Activated CD8-positive, alpha-beta T cell treated with anti-CD3 and anti-CD28 coated beads for 36 hours (primary cell): ENCODE measurements at regions of chr6 and their contacts with region 1.

Region 1: GRCh38 chr6:121849477-121849876 is 414.0 kb downstream of the GJA1 start:
- DNase-seq: peak; percentile 61
- ATAC-seq: peak; percentile 80
- H3K4me3 Mint-ChIP-seq: no peak overlapping the region
- H3K27ac Mint-ChIP-seq: no peak overlapping the region
- H3K4me1 Mint-ChIP-seq: no peaks in the 10 kb centered on the region
- H3K27me3 Mint-ChIP-seq: peaks cover 2% of the 10 kb centered on the region
- CTCF ChIP-seq: peak; percentile 54

Region 2: GRCh38 chr6:121055572-121056163 is 793.8 kb before region 1 on chr6:
- CTCF ChIA-PET with region 1: interaction called, 8 read pairs
- POLR2A ChIA-PET with region 1: no interaction called
- intact Hi-C with region 1: loop called (anchors 10 kb)
- DNase-seq: no peak
- ATAC-seq: peak; percentile 56
- H3K4me3 Mint-ChIP-seq: no peak overlapping the region
- H3K27ac Mint-ChIP-seq: no peak overlapping the region
- H3K4me1 Mint-ChIP-seq: no peaks in the 10 kb centered on the region
- H3K27me3 Mint-ChIP-seq: no peaks in the 10 kb centered on the region
- CTCF ChIP-seq: peak; percentile 90

Region 3: GRCh38 chr6:121430514-121431460 is 418.7 kb before region 1 on chr6:
- CTCF ChIA-PET with region 1: interaction called, 3 read pairs
- POLR2A ChIA-PET with region 1: no interaction called
- intact Hi-C with region 1: loop called (anchors 5 kb)
- DNase-seq: no peak
- ATAC-seq: no peak
- H3K4me3 Mint-ChIP-seq: no peak overlapping the region
- H3K27ac Mint-ChIP-seq: no peak overlapping the region
- H3K4me1 Mint-ChIP-seq: no peaks in the 10 kb centered on the region
- H3K27me3 Mint-ChIP-seq: peaks cover 7% of the 10 kb centered on the region
- CTCF ChIP-seq: no peak

Region 4: GRCh38 chr6:121838842-121839241 is 10.6 kb before region 1 on chr6:
- CTCF ChIA-PET with region 1: interaction called, 10 read pairs
- POLR2A ChIA-PET with region 1: no interaction called
- intact Hi-C with region 1: no loop called
- DNase-seq: peak; percentile 2
- ATAC-seq: no peak
- H3K4me3 Mint-ChIP-seq: no peak overlapping the region
- H3K27ac Mint-ChIP-seq: no peak overlapping the region
- H3K4me1 Mint-ChIP-seq: no peaks in the 10 kb centered on the region
- H3K27me3 Mint-ChIP-seq: no peaks in the 10 kb centered on the region
- CTCF ChIP-seq: no peak

Region 5: DNA sequence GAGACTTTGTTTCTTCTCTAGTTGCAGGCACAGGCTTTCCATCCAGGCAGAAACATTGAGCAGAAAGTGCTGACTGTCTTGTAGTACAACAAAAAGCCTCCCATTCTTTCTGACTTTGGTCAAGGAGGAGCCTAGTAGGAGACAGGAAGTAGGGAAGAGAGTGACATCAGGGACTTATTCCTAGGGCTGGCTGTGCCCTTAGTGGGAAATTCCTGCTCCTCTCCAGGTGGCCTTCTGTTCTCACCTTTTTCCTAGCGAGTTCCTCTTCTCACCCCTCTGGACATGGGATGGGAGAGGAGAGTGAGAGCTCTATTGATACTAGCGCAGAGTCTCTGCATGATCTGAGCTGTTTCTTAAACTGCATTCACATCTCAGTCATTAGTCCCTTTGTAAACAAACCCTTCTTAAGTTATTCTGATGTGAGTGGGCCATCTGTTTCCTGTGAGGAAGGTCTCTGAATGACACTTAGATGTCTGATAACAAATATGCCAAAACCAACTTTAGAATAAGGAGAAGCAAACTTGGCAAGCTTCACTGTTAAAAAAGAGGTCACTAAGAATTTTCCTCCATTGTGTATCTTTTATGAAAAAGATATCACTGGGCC is 40.9 kb after region 1 on chr6:
- CTCF ChIA-PET with region 1: no interaction called
- POLR2A ChIA-PET with region 1: no interaction called
- intact Hi-C with region 1: no loop called
- DNase-seq: no peak
- ATAC-seq: no peak
- H3K4me3 Mint-ChIP-seq: no peak overlapping the region
- H3K27ac Mint-ChIP-seq: no peak overlapping the region
- H3K4me1 Mint-ChIP-seq: no peaks in the 10 kb centered on the region
- H3K27me3 Mint-ChIP-seq: no peaks in the 10 kb centered on the region
- CTCF ChIP-seq: no peak